GM12878 (cell line): ENCODE measurements at regions of chr18 and their contacts with region 1.

Region 1: GRCh38 chr18:63299837-63300745 is 19.5 kb downstream of the BCL2 start:
- DNase-seq: no peak
- ATAC-seq: peak; percentile 83
- H3K4me3 ChIP-seq: no peak overlapping the region; the same call in 1 of the 2 replicates
- H3K27ac ChIP-seq: peak overlapping the region; percentile 55
- H3K4me1 ChIP-seq: peaks cover 48% of the 10 kb centered on the region
- H3K27me3 ChIP-seq: no peaks in the 10 kb centered on the region
- CTCF ChIP-seq: no peak
- EP300 ChIP-seq: 0 out of 4 replicates have a peak, but pooled peaks of 1 of the 2 experiments have one; percentile 23
- POLR2A ChIP-seq: no peak
- RAD21 ChIP-seq: no peak

Region 2: DNA sequence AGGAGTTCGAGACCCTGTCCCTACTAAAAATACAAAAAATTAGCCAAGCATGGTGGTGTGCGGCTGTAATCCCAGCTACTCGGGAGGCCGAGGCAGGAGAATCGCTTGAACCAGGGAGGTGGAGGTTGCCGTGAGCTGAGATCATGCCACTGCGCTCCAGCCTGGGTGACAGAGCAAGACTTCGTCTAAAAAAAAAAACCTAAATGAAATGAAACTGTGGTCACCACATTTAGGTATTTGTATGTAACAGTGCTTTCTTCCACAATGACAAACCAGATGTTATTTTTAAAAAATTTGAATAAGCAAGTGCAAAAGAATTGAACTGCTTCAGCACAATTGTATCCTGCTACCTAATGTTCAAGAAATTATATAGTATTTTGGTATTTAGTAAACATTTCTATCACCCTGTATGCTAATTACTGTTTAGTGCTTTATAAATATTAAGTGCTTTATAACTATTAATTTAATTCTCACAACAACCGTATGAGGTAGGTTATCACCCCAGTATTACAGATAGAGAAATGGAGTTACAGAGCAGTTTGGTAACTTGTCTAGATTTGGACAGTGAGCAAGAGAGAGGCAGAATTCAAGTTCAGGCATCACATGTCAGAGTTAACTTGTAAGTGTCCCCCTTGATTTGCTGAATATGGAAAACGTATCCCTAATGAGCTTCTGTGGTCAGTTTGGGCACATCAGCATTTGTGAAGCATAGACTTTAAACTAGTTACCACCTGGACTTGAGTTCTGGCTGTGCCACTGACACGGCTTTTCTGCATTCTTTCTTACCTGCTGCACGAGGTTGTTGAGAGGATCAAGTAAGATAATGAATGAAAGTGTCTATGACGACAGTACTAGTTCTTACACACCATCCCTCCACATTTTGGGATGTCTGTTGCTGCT is 570.4 kb before region 1 on chr18:
- CTCF ChIA-PET with region 1: no interaction called
- POLR2A ChIA-PET with region 1: no interaction called
- RAD21 ChIA-PET with region 1: no interaction called
- SMC1A ChIA-PET with region 1: no interaction called
- in situ Hi-C with region 1: no loop called
- intact Hi-C with region 1: no loop called
- DNase-seq: no peak
- ATAC-seq: peak; percentile 88
- H3K4me3 ChIP-seq: peak overlapping the region; percentile 29; the same call in 1 of the 2 replicates
- H3K27ac ChIP-seq: no peak overlapping the region
- H3K4me1 ChIP-seq: peaks cover 12% of the 10 kb centered on the region
- H3K27me3 ChIP-seq: no peaks in the 10 kb centered on the region
- CTCF ChIP-seq: no peak
- EP300 ChIP-seq: no peak
- POLR2A ChIP-seq: no peak
- RAD21 ChIP-seq: no peak

Region 3: DNA sequence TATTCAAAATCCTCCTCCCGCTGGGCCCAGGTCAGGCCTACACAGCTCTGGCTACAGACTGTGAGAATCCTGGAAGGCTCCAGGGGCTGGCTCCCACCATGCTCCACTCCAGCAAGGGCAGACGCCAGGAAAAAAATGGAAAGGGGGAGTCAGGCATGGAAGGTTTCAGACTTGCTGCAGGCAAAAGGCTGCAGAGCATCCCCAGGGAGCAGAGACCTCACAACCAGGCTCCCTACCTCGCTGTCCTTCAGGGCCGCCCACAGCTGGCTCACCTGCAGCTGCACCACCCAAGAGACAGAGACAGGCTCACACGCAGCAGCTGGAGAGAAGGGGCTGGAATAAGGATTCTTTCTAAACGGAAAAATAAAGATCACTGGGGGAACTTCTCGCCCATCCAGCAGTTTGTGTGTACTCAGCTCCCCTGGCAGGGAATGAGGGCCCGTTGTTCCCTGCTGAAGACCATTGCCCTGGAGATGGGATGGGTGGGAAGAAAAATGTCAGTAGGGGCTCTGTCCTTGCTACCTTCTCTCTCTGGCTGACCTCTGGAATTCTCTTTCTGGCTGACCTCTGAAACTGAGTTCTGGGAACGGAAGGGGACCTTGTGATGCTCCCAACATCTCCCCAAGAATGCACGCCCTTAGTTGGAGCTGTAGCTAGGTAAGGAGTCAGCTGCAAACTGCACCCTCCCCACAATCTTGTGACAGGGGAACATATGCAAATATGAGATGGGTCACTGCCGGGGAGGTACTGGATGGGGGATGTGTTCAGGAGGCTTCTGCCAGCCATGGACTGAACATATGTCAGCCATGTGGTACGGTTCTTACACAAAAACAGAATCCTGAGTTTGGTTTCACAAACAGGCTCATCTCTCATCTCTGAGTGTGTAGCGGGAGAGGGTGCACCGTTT is 15.0 kb before region 1 on chr18:
- CTCF ChIA-PET with region 1: interaction called, 26 read pairs
- POLR2A ChIA-PET with region 1: interaction called, 3 read pairs
- RAD21 ChIA-PET with region 1: interaction called, 5 read pairs
- SMC1A ChIA-PET with region 1: interaction called, 22 read pairs
- in situ Hi-C with region 1: no loop called
- intact Hi-C with region 1: no loop called
- DNase-seq: peak; percentile 66
- ATAC-seq: peak; percentile 94
- H3K4me3 ChIP-seq: peak overlapping the region; percentile 25
- H3K27ac ChIP-seq: peak overlapping the region; percentile 73
- H3K4me1 ChIP-seq: peaks cover 57% of the 10 kb centered on the region
- H3K27me3 ChIP-seq: no peaks in the 10 kb centered on the region
- CTCF ChIP-seq: no peak
- EP300 ChIP-seq: no peak
- POLR2A ChIP-seq: peak; percentile 65
- RAD21 ChIP-seq: no peak

Region 4: GRCh38 chr18:63511286-63511685 is 211.2 kb after region 1 on chr18:
- CTCF ChIA-PET with region 1: no interaction called
- POLR2A ChIA-PET with region 1: no interaction called
- RAD21 ChIA-PET with region 1: no interaction called
- SMC1A ChIA-PET with region 1: no interaction called
- in situ Hi-C with region 1: no loop called
- intact Hi-C with region 1: no loop called
- DNase-seq: no peak
- ATAC-seq: peak; percentile 64
- H3K4me3 ChIP-seq: no peak overlapping the region
- H3K27ac ChIP-seq: no peak overlapping the region
- H3K4me1 ChIP-seq: no peaks in the 10 kb centered on the region
- H3K27me3 ChIP-seq: 0 out of 4 replicates have a peak, but pooled peaks cover 0 to 1% of the 10 kb centered on the region in 2 experiments
- CTCF ChIP-seq: peak; percentile 52 to 67 (median 52)
- EP300 ChIP-seq: no peak
- POLR2A ChIP-seq: no peak
- RAD21 ChIP-seq: peak; percentile 16; the same call in 1 of the 2 replicates